ENCODE measurements at regions of chr22 and their contacts with region 1.

Region 1: DNA sequence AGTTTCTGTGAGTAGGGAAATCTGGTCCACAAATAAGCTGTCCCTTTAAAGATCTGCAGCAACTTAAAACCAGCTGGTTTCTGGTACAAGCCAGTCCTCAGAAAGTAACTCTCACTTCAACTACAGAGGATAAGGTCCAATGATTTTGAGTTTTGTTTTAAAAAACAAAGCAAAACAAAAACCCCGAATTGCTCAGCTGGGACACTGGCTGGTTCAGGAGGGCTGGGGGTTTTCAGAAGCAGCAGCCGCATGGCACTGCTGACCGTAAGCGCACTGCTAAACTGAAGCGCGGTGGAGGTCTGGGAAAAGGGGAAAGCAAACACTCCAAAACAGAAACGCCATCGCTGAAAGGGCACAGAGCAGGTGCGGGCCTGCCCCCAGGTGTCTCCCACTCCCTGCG is 59.7 kb downstream of the MICAL3 start:
- DNase-seq: no peak
- ATAC-seq: no peak
- H3K4me3 ChIP-seq: no peak overlapping the region
- H3K27ac ChIP-seq: no peak overlapping the region
- H3K4me1 ChIP-seq: peaks cover 11 to 16% of the 10 kb centered on the region in 2 experiments; a peak in 4 of 5 replicates
- H3K27me3 ChIP-seq: no peaks in the 10 kb centered on the region
- CTCF ChIP-seq: no peak
- EP300 ChIP-seq: no peak
- POLR2A ChIP-seq: no peak
- RAD21 ChIP-seq: no peak

Region 2: DNA sequence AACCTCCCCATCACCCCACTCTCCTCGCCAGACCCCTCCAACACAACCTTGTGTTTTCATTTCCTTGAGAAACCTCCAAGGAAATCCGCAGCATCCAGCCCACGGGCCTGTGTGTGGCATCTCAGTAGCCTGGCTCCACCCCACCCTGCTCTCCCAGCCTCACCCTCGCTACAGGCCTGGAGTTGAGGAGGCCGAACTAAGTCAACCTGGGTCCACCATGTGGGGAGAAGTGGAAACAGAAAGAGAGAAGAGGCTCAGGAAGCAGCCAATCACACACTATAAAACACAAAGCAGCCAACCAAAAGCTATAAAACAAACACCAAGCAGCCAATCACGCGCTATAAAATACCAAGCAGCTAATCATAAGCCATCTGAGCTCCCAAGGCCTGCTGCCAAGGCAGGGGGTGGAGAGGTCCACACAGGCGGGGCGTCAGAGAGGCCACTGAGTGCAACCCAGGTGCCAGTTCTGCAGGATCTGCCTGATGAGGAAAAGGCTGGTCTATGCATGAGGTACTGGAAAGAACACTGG is 12.3 kb before region 1 on chr22:
- CTCF ChIA-PET with region 1: no interaction called
- POLR2A ChIA-PET with region 1: interaction called, 11 read pairs
- in situ Hi-C with region 1: no loop called
- intact Hi-C with region 1: no loop called
- DNase-seq: peak in 2 of 4 experiments; percentile 19 to 44
- ATAC-seq: peak; percentile 63
- H3K4me3 ChIP-seq: no peak overlapping the region
- H3K27ac ChIP-seq: no peak overlapping the region
- H3K4me1 ChIP-seq: peaks cover 0 to 4% of the 10 kb centered on the region in 2 experiments; a peak in 4 of 5 replicates
- H3K27me3 ChIP-seq: no peaks in the 10 kb centered on the region
- CTCF ChIP-seq: no peak
- EP300 ChIP-seq: no peak
- POLR2A ChIP-seq: no peak
- RAD21 ChIP-seq: no peak

Measured in K562 (cell line).